Esophagus muscularis mucosa (tissue), 4 donors: ENCODE measurements at regions of chr5 and their contacts with region 1.

Region 1: GRCh38 chr5:179795863-179796833 is 2.4 kb downstream of the LTC4S start:
- DNase-seq: no peak
- H3K4me3 ChIP-seq: peak overlapping the region; percentile 62 to 80 (median 72)
- H3K27ac ChIP-seq: peak overlapping the region; percentile 79 to 90 (median 84)
- H3K4me1 ChIP-seq: peaks cover 48 to 62% (median 59%) of the 10 kb centered on the region in 4 donors
- H3K27me3 ChIP-seq: no peaks in the 10 kb centered on the region
- CTCF ChIP-seq: peak; percentile 86 to 95 (median 89)
- EP300 ChIP-seq: no peak
- POLR2A ChIP-seq: peak; percentile 12

Region 2: GRCh38 chr5:179763215-179763945 is 32.8 kb before region 1 on chr5:
- intact Hi-C with region 1: loop called (anchors 5 kb)
- DNase-seq: no peak
- H3K4me3 ChIP-seq: no peak overlapping the region
- H3K27ac ChIP-seq: peak overlapping the region; percentile 51 to 77 (median 64)
- H3K4me1 ChIP-seq: peaks cover 72 to 93% (median 83%) of the 10 kb centered on the region in 4 donors
- H3K27me3 ChIP-seq: no peaks in the 10 kb centered on the region
- CTCF ChIP-seq: peak; percentile 84 to 91 (median 89)
- EP300 ChIP-seq: no peak
- POLR2A ChIP-seq: no peak